ENCODE measurements at regions of chr3 and their contacts with region 1.

Region 1: DNA sequence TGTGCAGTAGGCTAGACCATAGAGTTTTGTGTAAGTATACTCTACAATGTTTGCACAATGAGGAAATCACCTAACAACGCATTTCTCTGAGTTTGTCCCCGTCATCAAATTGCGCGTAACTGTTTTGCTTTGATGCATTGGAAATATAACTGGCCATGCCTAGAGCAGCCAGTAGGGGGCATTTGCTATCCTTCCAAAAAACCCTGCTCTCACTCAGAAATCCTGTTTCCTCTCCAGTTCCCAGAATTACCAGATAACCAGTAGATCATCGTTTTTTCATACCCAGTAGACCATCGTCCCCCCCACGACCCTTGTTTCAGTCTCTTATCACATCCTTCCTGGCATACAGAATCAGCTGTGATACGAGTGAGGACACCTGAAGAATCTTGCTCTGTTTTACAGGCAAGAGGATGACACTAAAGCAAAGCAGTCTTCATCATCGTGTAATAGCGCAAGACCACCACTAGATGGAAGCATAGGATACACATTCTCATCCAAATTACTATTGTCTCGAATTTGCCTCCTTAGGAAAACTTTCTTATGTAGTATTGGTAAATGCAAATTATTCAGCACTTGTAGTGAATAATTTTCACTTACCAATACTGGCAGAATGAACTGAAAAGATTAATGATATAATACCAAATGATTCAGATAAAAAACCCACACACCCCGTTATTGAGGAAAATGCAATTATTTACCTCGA is 4.4 kb upstream of the GABRR3 start:
- DNase-seq: peak; percentile 86
- H3K4me3 Mint-ChIP-seq: peak overlapping the region; percentile 88
- H3K27ac Mint-ChIP-seq: peak overlapping the region; percentile 98
- H3K4me1 Mint-ChIP-seq: peaks cover 6% of the 10 kb centered on the region
- H3K27me3 Mint-ChIP-seq: no peaks in the 10 kb centered on the region

Region 2: DNA sequence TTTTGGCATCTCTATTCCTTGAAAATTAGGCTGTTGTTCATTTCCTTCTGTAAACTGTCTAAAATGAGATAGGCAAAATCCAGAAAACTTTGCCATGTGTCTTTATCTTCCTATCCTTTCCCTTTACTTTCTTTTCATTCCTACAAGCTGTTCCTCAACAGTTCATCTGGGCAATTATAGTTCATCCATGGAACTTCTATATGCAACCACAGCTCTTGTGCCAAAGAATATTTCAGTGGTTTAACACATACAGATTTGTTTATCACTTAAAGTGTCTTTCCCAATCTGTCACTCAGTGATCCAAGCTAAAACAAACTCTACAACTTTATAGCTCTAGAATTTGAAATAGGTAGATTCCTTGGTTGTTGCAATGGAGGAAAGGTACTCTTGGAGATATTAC is 1455.4 kb before region 1 on chr3:
- CTCF ChIA-PET with region 1: no interaction called
- intact Hi-C with region 1: no loop called
- DNase-seq: no peak
- H3K4me3 Mint-ChIP-seq: no peak overlapping the region
- H3K27ac Mint-ChIP-seq: no peak overlapping the region
- H3K4me1 Mint-ChIP-seq: no peaks in the 10 kb centered on the region
- H3K27me3 Mint-ChIP-seq: no peaks in the 10 kb centered on the region

Region 3: GRCh38 chr3:97495896-97496295 is 543.6 kb before region 1 on chr3:
- CTCF ChIA-PET with region 1: no interaction called
- intact Hi-C with region 1: no loop called
- DNase-seq: no peak
- H3K4me3 Mint-ChIP-seq: no peak overlapping the region
- H3K27ac Mint-ChIP-seq: no peak overlapping the region
- H3K4me1 Mint-ChIP-seq: no peaks in the 10 kb centered on the region
- H3K27me3 Mint-ChIP-seq: no peaks in the 10 kb centered on the region

Region 4: GRCh38 chr3:98109807-98110549 is 70.5 kb after region 1 on chr3:
- CTCF ChIA-PET with region 1: no interaction called
- intact Hi-C with region 1: no loop called
- DNase-seq: no peak
- H3K4me3 Mint-ChIP-seq: no peak overlapping the region
- H3K27ac Mint-ChIP-seq: no peak overlapping the region
- H3K4me1 Mint-ChIP-seq: no peaks in the 10 kb centered on the region
- H3K27me3 Mint-ChIP-seq: no peaks in the 10 kb centered on the region

Region 5: GRCh38 chr3:98188545-98188944 is 149.1 kb after region 1 on chr3:
- CTCF ChIA-PET with region 1: no interaction called
- intact Hi-C with region 1: loop called (anchors 1 kb)
- DNase-seq: no peak
- H3K4me3 Mint-ChIP-seq: no peak overlapping the region
- H3K27ac Mint-ChIP-seq: no peak overlapping the region
- H3K4me1 Mint-ChIP-seq: peaks cover 4% of the 10 kb centered on the region
- H3K27me3 Mint-ChIP-seq: peaks cover 6% of the 10 kb centered on the region

Region 6: GRCh38 chr3:98343647-98344507 is 304.4 kb after region 1 on chr3:
- CTCF ChIA-PET with region 1: interaction called, 7 read pairs
- intact Hi-C with region 1: loop called (anchors 1 kb)
- DNase-seq: peak; percentile 59
- H3K4me3 Mint-ChIP-seq: no peak overlapping the region
- H3K27ac Mint-ChIP-seq: no peak overlapping the region
- H3K4me1 Mint-ChIP-seq: no peaks in the 10 kb centered on the region
- H3K27me3 Mint-ChIP-seq: peaks cover 11% of the 10 kb centered on the region

Region 7: GRCh38 chr3:98573181-98573728 is 533.8 kb after region 1 on chr3:
- CTCF ChIA-PET with region 1: interaction called, 3 read pairs
- intact Hi-C with region 1: loop called (anchors 1 kb)
- DNase-seq: no peak
- H3K4me3 Mint-ChIP-seq: no peak overlapping the region
- H3K27ac Mint-ChIP-seq: peak overlapping the region; percentile 47
- H3K4me1 Mint-ChIP-seq: peaks cover 19% of the 10 kb centered on the region
- H3K27me3 Mint-ChIP-seq: no peaks in the 10 kb centered on the region

Region 8: DNA sequence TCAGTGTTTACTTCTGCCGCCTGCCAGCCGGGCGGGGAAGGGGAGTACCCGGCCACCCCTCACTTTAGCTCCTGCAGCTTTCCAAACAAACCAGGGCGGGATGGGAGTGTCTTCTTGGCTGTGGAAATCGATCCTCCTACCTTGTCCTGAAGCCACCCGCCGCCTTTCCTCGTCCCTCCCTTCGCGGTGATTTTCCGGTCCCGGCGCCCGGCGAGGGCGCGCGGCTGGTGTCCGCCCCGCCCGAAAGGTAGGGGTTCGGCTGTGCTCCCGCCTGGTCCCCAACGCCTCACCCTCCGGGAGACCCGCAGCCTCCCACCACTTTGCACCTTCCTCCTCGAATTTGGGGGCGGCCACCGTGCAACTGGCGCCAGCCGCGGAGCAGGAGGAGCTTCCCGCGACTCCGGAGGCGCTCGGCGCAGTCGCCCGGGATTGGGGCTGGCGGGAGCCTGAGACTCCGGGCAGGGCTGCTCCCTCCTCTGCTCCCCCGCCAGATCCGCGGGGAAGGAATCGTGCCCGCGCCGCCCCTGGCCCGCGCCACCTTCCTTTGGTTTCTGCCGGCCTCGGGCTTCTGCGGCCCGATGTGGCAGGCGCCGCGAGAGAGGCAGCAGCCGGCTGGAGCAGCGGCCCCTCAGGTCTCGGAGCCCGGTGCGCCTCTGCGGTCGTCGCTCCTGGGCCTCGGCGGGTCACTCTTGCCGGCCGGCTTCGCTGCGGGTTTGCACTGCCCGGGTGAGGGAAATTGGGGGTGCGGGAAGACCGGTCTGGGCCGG is 693.0 kb after region 1 on chr3:
- CTCF ChIA-PET with region 1: interaction called, 3 read pairs
- intact Hi-C with region 1: loop called (anchors 10 kb)
- DNase-seq: peak; percentile 25
- H3K4me3 Mint-ChIP-seq: peak overlapping the region; percentile 69
- H3K27ac Mint-ChIP-seq: no peak overlapping the region
- H3K4me1 Mint-ChIP-seq: peaks cover 12% of the 10 kb centered on the region
- H3K27me3 Mint-ChIP-seq: peaks cover 58% of the 10 kb centered on the region

Region 9: DNA sequence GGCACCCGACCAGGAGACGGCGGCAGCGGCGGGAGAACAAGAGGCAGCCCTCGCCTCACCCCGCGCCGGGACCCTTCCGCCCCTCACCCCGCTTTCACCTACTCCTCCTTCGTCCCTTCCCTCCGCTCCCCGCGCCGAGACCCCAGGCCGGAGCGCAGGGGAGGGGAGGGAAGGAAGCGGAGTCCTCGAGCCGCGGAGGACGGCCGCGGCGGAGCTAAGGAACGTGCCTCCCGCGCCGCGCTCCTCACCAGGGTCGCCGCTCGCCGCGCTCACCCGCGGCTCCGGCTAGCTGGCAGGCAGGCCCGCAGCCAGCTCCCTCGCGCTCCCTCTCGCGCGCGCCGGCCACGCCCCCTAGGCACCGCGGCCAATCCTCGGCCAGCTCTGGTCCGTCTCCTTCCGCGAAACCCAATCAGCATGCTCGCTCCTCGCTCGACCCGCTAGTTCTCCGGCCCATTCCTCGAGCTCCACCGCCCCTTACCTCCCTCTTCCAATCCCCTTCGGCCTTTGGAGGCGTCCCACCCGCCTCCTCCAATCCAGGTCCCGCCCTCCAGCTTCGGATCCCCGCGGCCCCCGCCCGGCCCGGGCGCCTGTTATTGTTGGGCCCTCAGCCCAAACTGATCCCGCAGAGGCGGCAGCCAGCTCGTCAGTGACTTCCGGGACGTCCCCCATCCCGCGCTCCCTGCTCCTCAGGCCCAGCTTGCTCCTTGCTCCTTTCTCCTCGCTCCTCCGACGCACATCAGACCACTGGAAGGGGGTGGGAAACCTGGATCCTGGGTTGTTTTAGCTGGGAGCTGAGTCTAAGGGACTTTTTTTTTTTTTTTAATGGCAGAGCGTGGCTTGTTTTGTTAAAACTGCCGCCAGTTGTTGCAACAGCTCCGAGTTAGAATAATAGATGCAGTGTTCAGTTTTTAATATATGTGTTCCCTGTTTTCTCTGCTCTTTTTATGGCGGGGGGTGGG is 862.2 kb after region 1 on chr3 and contains the start of gene DCBLD2:
- CTCF ChIA-PET with region 1: no interaction called
- intact Hi-C with region 1: loop called (anchors 2 kb)
- DNase-seq: peak; percentile 95
- H3K4me3 Mint-ChIP-seq: peak within 1 kb of the TSS; percentile 83
- H3K27ac Mint-ChIP-seq: peak within 1 kb of the TSS; percentile 28
- H3K4me1 Mint-ChIP-seq: peaks cover 12% of the 10 kb centered on the region
- H3K27me3 Mint-ChIP-seq: peaks cover 2% of the 10 kb centered on the region
- total RNA-seq, gene DCBLD2: 1.3 to 2.1 TPM

Measured in activated naive CD4-positive, alpha-beta T cell treated with anti-CD3 and anti-CD28 coated beads for 36 hours (primary cell).